ENCODE measurements at regions of chr5 and their contacts with region 1.

Region 1: DNA sequence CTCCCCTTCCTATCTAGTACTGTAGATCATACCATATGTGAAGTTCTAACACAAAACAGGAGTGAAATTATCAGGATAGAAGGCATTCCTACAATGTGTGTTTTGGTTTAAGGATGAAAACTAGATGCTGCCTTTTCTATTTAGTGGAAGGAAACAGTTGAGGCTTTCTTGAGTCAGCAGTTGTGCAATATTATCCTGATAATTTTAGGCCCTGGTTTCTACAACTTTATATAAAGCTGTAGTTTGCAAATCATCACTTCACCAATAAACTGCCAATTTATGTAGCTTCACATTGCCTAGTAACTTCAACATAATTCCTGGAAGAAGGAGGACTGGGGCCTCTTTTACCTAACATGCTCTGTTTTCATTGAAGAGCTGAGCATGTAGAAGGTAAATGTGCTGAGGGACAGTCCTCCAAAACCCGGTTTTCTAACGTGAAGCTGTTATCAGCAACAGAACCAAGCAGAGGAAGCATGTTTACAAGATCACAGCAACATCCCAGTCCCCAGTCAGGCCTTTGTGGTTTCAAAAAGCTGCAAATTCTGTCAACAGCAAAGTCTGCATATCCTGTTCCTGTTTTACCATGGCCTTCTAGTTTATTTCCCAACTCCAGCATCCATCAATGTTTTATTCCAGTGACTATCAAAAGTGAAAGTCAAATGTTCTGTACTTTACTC is 513.4 kb upstream of the MEF2C start:
- DNase-seq: peak; percentile 82 to 89 (median 86)
- H3K4me3 ChIP-seq: peak overlapping the region in 2 of 3 experiments; percentile 9 to 62
- H3K4me3 Mint-ChIP-seq: peak overlapping the region; percentile 43 to 83
- H3K27ac ChIP-seq: peak overlapping the region; percentile 18 to 97
- H3K27ac Mint-ChIP-seq: peak overlapping the region; percentile 97 to 99 (median 97)
- H3K4me1 ChIP-seq: peaks cover 37 to 45% of the 10 kb centered on the region in 2 donors
- H3K4me1 Mint-ChIP-seq: peaks cover 45% of the 10 kb centered on the region
- H3K27me3 ChIP-seq: no peaks in the 10 kb centered on the region
- H3K27me3 Mint-ChIP-seq: peaks cover 0 to 1% (median 0%) of the 10 kb centered on the region in 3 donors
- CTCF ChIP-seq: no peak

Region 2: DNA sequence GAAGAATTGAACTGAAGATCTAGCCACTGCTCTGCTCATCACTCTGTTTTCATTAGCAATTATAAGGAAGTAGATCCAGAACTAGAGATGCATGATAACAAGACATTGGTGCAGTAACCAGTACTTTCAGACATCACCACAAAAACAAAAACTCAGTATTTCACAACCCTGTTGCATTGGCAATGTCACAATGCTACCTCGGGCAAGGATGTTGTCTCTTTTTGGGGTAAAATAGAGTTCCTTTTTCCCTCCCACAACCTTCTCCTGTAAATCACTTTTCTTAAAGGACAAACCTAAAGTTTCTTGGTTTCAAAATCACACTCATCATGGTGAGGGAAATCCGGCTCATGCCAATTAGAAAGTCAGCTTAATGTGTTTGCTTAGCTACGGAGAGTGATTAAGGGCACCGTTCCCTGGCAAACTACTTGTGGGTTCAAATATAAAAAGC is 93.4 kb before region 1 on chr5:
- intact Hi-C with region 1: loop called in 1 of 2 experiments (anchors 10 kb)
- DNase-seq: peak; percentile 82 to 94 (median 90)
- H3K4me3 ChIP-seq: peak overlapping the region in 2 of 3 experiments; percentile 19 to 34
- H3K4me3 Mint-ChIP-seq: peak overlapping the region; percentile 0 to 46
- H3K27ac ChIP-seq: peak overlapping the region in 1 of 2 donors; percentile 84
- H3K27ac Mint-ChIP-seq: peak overlapping the region; percentile 75 to 89 (median 82)
- H3K4me1 ChIP-seq: peaks cover 42 to 58% of the 10 kb centered on the region in 2 donors
- H3K4me1 Mint-ChIP-seq: peaks cover 55% of the 10 kb centered on the region
- H3K27me3 ChIP-seq: no peaks in the 10 kb centered on the region
- H3K27me3 Mint-ChIP-seq: peaks cover 0 to 1% (median 0%) of the 10 kb centered on the region in 3 donors
- CTCF ChIP-seq: no peak